ENCODE measurements at regions of chr2 and their contacts with region 1.

Region 1: DNA sequence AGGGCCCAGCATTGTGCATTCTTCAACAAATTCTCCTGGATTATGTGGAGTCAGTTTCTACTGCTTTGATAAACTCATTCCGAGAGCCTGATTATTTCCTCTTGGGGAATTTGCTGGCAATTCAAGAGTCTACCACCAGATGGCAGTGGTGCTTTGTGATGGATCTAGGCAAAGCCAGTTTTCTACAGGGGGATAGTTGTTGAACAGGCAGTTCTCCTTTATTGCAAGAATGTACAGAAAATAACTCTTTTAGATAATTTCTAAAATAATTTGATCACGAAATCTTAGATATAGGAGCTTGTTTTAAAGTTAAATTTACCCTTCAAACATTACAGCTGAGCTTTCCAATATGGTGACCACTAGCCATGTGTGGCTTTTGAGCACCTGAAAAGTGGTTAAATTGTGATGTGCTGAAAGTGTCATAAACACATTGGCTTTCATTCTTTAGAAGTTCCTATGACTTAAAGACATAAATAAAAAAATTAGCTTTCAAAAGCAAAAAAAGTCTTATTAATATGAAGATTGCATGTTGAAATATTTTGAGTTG is 66.7 kb upstream of the HAAO start:
- DNase-seq: peak; percentile 33
- H3K4me3 Mint-ChIP-seq: no peak overlapping the region
- H3K27ac Mint-ChIP-seq: no peak overlapping the region
- H3K4me1 Mint-ChIP-seq: no peaks in the 10 kb centered on the region
- H3K27me3 Mint-ChIP-seq: no peaks in the 10 kb centered on the region

Region 2: DNA sequence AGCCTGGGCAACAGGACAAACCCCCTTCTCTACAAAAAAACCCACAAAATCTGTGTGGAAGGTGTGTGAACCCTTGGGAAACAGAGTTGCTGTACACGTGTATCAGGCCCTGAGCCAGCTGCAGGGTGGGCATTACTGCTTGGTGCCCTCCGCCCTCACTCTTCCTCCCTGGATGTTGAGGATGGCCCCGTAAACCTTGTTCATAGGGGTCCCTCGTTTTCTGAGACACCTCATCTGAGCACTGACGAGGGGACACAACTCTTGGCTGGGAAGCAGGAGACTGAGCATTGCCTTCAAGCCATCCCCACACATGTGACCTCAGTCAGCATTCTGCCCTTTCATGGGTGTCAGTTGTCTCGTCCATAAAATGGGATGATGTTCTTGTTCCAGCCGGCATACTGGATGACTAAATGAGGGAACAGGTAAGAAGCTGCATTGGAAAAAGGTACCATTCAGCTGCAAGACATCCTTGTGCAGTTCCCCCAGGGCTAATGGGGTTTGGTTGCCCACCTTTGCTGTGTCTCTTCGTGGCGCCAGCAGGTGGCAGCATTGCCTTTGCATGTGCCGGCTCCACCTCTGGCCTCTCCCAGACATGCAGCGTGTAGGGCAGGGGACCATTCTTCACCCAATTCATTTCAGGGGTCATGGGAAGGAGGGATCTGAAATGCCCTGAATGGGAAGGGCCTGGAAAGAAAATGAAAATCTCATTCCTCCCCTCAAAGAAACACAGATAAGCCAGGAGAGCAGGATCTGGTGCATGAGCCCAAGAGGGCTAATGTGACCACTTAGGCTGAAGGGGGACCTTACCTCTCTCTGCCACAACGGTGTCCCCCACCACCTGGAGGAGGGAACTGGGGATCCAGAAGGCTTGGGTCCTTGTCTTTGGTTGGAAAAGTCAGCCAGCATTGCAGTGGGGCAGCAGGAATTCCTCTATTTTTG is 30.3 kb before region 1 on chr2:
- intact Hi-C with region 1: loop called (anchors 2 kb)
- DNase-seq: peak; percentile 52
- H3K4me3 Mint-ChIP-seq: no peak overlapping the region
- H3K27ac Mint-ChIP-seq: no peak overlapping the region
- H3K4me1 Mint-ChIP-seq: peaks cover 16% of the 10 kb centered on the region
- H3K27me3 Mint-ChIP-seq: peaks cover 14% of the 10 kb centered on the region

Region 3: GRCh38 chr2:42928692-42929545 is 69.8 kb after region 1 on chr2:
- intact Hi-C with region 1: loop called (anchors 10 kb)
- DNase-seq: no peak
- H3K4me3 Mint-ChIP-seq: no peak overlapping the region
- H3K27ac Mint-ChIP-seq: no peak overlapping the region
- H3K4me1 Mint-ChIP-seq: no peaks in the 10 kb centered on the region
- H3K27me3 Mint-ChIP-seq: no peaks in the 10 kb centered on the region

Region 4: DNA sequence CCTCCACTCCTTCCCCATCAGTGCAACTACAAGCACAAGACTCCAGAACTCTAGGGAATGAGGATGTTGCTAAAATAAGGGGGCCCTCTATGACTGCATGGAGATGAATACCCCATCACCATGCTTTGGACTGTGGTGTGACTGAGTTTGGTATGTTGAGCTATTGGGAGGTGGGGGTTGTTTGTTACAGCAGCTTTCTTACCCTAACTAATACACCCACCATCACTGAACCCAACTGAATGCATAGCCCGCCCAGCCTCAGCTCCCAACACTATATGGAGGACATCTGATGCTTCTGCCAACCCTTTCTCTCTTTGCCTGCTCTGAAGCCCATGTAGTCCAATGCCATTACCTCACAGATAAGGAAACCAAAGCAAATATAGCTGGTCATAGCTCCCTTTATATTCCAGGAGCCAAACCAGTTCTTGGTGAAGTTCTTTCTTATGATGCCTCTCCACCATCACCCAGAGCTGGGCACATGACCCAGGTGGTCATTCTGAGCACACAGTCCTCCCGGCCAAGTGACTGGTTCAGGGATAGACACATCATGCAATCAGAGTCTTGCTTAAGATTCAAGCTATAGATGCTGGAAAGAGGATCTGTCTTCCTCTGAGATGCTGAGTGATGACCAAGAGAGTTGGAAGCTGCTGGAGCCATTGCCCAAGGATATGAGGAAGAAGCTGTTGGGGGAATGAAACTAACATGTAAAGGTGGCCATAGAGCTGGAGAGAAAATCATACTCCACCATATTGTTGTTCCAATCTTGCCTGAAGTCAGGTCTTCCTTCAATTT is 88.9 kb after region 1 on chr2:
- intact Hi-C with region 1: loop called (anchors 2 kb)
- DNase-seq: no peak
- H3K4me3 Mint-ChIP-seq: no peak overlapping the region
- H3K27ac Mint-ChIP-seq: no peak overlapping the region
- H3K4me1 Mint-ChIP-seq: peaks cover 7% of the 10 kb centered on the region
- H3K27me3 Mint-ChIP-seq: peaks cover 15% of the 10 kb centered on the region

Region 5: DNA sequence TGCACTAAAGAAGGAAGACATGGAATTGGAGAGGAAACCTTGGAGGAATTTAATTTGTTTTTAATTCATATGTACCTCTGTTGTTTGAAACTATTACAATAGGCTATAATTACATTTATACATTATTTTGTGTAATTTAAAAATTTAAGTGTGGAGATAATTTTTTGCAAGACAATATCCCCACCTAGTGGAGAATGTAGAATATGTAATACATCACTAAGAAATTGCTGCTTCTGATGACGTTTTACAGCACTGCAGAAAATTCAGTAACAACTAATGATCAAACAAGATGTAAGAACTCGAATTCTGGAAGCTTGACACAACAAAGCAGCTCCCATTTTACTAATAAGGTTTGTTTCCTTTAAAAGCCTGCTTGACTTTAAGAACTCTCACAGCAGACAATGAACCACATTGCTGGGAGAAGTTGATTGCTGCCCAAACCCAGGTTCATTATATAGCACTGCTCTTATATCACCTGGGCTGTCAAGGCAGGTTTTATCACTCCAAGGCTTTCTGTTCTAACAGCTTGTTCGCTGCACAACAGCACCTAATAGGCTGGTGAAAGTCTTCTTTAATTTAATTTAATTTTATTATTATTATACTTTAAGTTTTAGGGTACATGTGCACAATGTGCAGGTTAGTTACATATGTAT is 683.3 kb after region 1 on chr2:
- intact Hi-C with region 1: loop called (anchors 2 kb)
- DNase-seq: no peak
- H3K4me3 Mint-ChIP-seq: no peak overlapping the region
- H3K27ac Mint-ChIP-seq: no peak overlapping the region
- H3K4me1 Mint-ChIP-seq: peaks cover 18% of the 10 kb centered on the region
- H3K27me3 Mint-ChIP-seq: no peaks in the 10 kb centered on the region

Region 6: GRCh38 chr2:43611987-43612894 is 753.2 kb after region 1 on chr2:
- intact Hi-C with region 1: loop called (anchors 1 kb)
- DNase-seq: peak; percentile 60
- H3K4me3 Mint-ChIP-seq: no peak overlapping the region
- H3K27ac Mint-ChIP-seq: no peak overlapping the region
- H3K4me1 Mint-ChIP-seq: peaks cover 5% of the 10 kb centered on the region
- H3K27me3 Mint-ChIP-seq: peaks cover 9% of the 10 kb centered on the region

Measured in activated T-helper 1 cell treated with anti-CD3 and anti-CD28 coated beads, Interleukin-12 subunit alpha, Interleukin-12 subunit beta, Interleukin-2, Interleukin-4 antibody, amounts not matched to agents 30 ng/mL and 10 ng/mL and 1 ng/mL, durations not matched to agents 14 hours and 24 hours and 36 hours (primary cell).